Psoas muscle (tissue), 8 donors: ENCODE measurements at regions of chr16 and their contacts with region 1.

Region 1: GRCh38 chr16:82660075-82660645 is 33.4 kb downstream of the CDH13 start:
- DNase-seq: peak; percentile 72 to 89
- ATAC-seq: peak; percentile 94 to 98 (median 96)
- H3K4me3 ChIP-seq: peak overlapping the region; percentile 57
- H3K27ac ChIP-seq: peak overlapping the region; percentile 91
- H3K4me1 ChIP-seq: peaks cover 39% of the 10 kb centered on the region
- H3K27me3 ChIP-seq: no peaks in the 10 kb centered on the region
- CTCF ChIP-seq: no peak

Region 2: GRCh38 chr16:81996664-81997622 is 663.2 kb before region 1 on chr16:
- intact Hi-C with region 1: no loop called
- DNase-seq: no peak
- ATAC-seq: no peak
- H3K4me3 ChIP-seq: no peak overlapping the region
- H3K27ac ChIP-seq: no peak overlapping the region
- H3K4me1 ChIP-seq: peaks cover 4% of the 10 kb centered on the region
- H3K27me3 ChIP-seq: no peaks in the 10 kb centered on the region
- CTCF ChIP-seq: no peak

Region 3: DNA sequence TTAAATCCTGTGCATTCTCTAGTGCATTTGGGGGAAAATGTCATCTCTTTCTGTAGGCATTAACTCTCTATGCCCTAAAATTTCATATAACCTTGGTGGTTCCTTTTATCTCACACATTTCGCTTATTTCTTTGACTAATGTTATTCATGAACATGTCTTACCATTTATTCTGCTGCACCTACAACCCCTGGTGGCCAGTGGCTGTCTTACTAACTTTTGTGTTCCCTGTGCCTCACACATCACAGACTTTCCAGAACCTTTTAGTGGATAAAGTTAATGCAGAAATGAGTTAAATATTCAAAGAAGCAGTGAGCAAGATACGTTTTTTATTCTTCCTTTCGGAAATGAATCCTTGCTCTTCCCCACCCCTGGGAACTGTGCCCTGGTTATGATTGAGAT is 78.5 kb after region 1 on chr16:
- intact Hi-C with region 1: loop called in 1 of 2 experiments (anchors 5 kb)
- DNase-seq: no peak
- ATAC-seq: no peak
- H3K4me3 ChIP-seq: no peak overlapping the region
- H3K27ac ChIP-seq: peak overlapping the region; percentile 91
- H3K4me1 ChIP-seq: peaks cover 54% of the 10 kb centered on the region
- H3K27me3 ChIP-seq: no peaks in the 10 kb centered on the region
- CTCF ChIP-seq: peak; percentile 36